Tibial artery (tissue), 4 donors: ENCODE measurements at regions of chr7 and their contacts with region 1.

Region 1: DNA sequence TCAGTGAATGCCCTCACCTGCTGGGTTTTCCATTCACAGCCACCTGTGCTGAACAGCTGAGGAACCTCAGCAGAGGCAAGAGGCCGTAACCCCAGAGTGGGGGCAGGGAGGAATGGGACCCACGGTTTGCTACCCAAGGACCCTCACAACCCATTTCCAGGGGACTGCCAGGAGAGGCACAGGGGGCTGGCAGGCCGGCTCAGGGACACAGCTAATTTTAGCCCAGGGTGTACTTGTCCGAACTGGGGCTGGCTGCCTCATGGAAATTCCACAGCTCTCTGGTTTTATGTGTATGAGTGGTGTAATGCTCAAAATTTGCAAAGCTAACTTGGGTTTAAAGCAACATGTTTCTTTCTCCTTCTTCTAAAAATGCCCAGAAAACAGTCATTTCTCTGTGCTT is 42.2 kb downstream of the MINDY4 start:
- DNase-seq: peak; percentile 73 to 89
- H3K4me3 ChIP-seq: no peak overlapping the region
- H3K27ac ChIP-seq: peak overlapping the region; percentile 83
- H3K4me1 ChIP-seq: peaks cover 6 to 73% (median 55%) of the 10 kb centered on the region in 4 donors
- H3K27me3 ChIP-seq: no peaks in the 10 kb centered on the region
- CTCF ChIP-seq: no peak

Region 2: GRCh38 chr7:30915751-30916150 is 102.3 kb after region 1 on chr7:
- intact Hi-C with region 1: loop called (anchors 2 kb)
- DNase-seq: no peak
- H3K4me3 ChIP-seq: peak overlapping the region; percentile 56 to 59
- H3K27ac ChIP-seq: peak overlapping the region; percentile 87 to 92
- H3K4me1 ChIP-seq: peaks cover 0 to 100% (median 91%) of the 10 kb centered on the region in 4 donors
- H3K27me3 ChIP-seq: no peaks in the 10 kb centered on the region
- CTCF ChIP-seq: no peak